ENCODE measurements at regions of chr6 and their contacts with region 1.

Region 1: DNA sequence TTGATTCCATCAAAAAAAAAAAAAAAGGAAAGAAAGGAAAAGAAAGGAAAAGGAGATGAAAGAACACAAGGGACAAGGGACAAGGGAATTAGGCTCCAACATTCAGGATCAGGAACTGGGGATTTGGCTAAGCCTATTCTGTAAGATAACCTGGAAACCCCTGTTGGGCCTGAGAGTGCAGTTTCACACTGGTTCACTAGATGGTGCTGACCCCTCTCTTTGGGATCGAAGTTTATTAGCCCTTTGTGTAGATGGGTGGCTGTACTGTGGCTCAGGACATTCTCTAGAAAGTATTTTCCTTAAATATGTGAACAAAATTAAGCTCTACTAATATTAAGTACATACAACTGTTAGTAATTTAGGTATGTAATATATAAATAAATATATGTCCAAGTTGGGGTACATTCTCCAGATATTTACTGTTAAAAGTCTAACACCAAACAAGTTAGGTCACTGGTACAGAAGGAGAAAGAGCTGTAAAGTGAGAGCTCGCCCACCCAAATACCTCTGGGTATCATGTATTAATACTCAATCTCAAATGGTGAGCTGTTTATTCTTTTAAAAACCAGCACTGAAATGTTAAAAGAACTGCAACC is 6.3 kb downstream of the OR2A4 start:
- DNase-seq: peak; percentile 50
- H3K4me3 ChIP-seq: no peak overlapping the region
- H3K27ac ChIP-seq: no peak overlapping the region
- H3K27me3 ChIP-seq: no peaks in the 10 kb centered on the region
- CTCF ChIP-seq: peak; percentile 98

Region 2: GRCh38 chr6:131717832-131718542 is 23.1 kb after region 1 on chr6:
- CTCF ChIA-PET with region 1: interaction called, 33 read pairs
- POLR2A ChIA-PET with region 1: no interaction called
- DNase-seq: no peak
- H3K4me3 ChIP-seq: no peak overlapping the region
- H3K27ac ChIP-seq: no peak overlapping the region
- H3K27me3 ChIP-seq: no peaks in the 10 kb centered on the region
- CTCF ChIP-seq: no peak

Region 3: GRCh38 chr6:131844243-131844841 is 149.4 kb after region 1 on chr6:
- CTCF ChIA-PET with region 1: interaction called, 13 read pairs
- POLR2A ChIA-PET with region 1: no interaction called
- DNase-seq: peak; percentile 43
- H3K4me3 ChIP-seq: no peak overlapping the region
- H3K27ac ChIP-seq: no peak overlapping the region
- H3K27me3 ChIP-seq: no peaks in the 10 kb centered on the region
- CTCF ChIP-seq: no peak

Region 4: DNA sequence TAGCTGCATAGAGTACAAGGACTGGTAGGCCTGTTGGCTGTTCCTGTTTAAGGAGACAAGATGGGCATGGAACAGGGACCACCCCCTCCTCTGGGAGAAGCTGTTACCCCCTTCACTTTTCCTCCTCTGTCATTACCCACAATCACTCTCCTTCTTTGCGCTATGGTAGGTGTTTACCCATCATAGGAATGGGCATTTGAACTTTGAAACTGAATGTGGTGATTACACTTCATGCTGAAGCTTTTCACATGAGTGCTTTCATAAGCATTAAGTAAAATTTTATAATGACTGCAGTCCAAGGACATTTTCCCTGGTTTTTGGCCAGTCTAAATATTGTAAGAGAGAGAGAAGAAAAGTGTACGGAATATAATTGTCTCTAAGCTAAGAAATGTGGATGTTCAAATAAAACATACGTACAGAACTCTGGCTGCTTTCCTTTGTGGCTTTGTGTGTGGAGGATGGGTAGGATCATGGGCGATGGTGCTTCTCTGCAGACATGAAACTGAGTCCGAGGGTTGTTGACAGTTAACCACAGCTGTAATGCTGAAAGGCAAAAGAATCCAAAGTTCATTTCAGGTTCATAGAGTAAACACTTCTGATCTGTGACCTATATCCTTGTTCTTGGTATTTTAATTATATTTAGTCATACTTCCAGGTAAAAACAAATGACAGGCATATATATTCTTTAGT is 200.0 kb after region 1 on chr6:
- CTCF ChIA-PET with region 1: interaction called, 18 read pairs
- POLR2A ChIA-PET with region 1: no interaction called
- DNase-seq: no peak
- H3K4me3 ChIP-seq: no peak overlapping the region
- H3K27ac ChIP-seq: no peak overlapping the region
- H3K27me3 ChIP-seq: no peaks in the 10 kb centered on the region
- CTCF ChIP-seq: no peak

Region 5: GRCh38 chr6:131909408-131910218 is 214.7 kb after region 1 on chr6:
- CTCF ChIA-PET with region 1: interaction called, 234 read pairs
- POLR2A ChIA-PET with region 1: no interaction called
- DNase-seq: peak; percentile 47
- H3K4me3 ChIP-seq: no peak overlapping the region
- H3K27ac ChIP-seq: no peak overlapping the region
- H3K27me3 ChIP-seq: no peaks in the 10 kb centered on the region
- CTCF ChIP-seq: peak; percentile 94

Region 6: DNA sequence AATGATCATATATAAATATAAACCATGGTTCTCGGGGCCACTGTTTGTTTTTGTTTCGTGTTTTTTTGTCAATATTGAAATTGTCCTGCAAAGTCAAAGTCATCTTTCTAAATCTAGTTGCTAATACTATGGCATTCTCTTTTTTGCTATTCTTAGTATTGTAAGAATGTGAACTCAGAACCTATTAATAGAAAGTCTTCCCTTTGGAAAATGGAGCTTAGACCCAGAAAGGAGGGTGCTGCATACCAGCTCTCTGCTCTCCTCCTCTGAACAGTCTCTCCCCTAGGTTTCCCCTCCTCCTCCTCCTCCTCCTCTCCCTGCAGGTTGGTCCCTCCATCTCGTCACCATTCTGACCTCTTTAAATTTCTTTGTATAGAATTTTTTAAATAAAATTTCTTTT is 406.6 kb after region 1 on chr6:
- CTCF ChIA-PET with region 1: no interaction called
- POLR2A ChIA-PET with region 1: no interaction called
- DNase-seq: no peak
- H3K4me3 ChIP-seq: no peak overlapping the region
- H3K27ac ChIP-seq: no peak overlapping the region
- H3K27me3 ChIP-seq: no peaks in the 10 kb centered on the region
- CTCF ChIP-seq: no peak